SK-N-SH (cell line): ENCODE measurements at regions of chr2 and their contacts with region 1.

Region 1: GRCh38 chr2:64915510-64915900 is 73.7 kb upstream of the SLC1A4 start:
- DNase-seq: no peak
- H3K4me3 ChIP-seq: no peak overlapping the region
- H3K27ac ChIP-seq: no peak overlapping the region
- H3K4me1 ChIP-seq: no peaks in the 10 kb centered on the region
- H3K27me3 ChIP-seq: no peaks in the 10 kb centered on the region
- CTCF ChIP-seq: no peak
- EP300 ChIP-seq: no peak
- RAD21 ChIP-seq: no peak

Region 2: DNA sequence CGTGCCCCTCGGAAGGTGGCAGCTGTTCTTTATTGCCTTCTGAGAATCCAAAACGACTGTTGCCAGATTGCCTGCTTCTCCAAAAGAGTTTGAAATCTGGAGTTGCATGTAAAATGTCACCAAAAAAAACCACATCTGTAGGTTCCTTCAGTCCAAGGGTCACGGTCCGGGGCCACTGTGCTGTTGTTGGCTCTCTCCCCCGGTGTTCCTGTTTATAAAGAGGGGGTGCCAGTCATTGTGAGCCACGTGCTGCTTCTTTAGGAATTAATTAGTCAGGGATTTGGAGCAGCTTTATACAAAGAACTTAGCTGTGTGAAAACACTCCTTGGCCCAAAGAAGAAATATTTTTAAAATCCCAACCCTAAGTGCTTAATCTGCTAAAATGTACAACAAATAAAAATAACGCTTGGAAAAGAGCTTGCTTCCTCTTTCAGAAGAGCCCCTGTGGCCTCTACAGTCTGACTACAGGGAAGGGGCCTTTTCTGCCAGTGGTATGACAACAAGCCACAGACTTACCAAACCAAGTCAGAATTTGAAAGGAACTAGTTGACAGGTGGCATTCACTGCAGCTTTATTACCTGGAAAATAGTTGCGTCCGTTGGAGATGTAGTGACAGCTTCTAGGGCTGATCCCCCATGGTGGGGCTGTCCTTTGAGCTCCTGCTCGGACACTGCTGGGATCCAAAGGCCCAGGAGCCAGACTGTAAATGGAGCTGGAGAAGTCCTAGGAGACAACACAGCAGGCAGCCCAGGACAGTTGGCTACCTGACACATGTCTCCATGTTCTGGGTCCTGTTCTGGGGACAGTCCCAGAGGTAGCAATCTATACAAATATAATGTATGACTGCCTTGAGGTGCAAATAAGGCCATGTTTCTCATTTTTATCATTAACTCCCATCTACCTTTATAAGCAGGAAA is 10.8 kb before region 1 on chr2:
- CTCF ChIA-PET with region 1: interaction called, 32 read pairs
- POLR2A ChIA-PET with region 1: no interaction called
- DNase-seq: no peak
- H3K4me3 ChIP-seq: no peak overlapping the region
- H3K27ac ChIP-seq: no peak overlapping the region
- H3K4me1 ChIP-seq: no peaks in the 10 kb centered on the region
- H3K27me3 ChIP-seq: peaks cover 13% of the 10 kb centered on the region; the same call in 1 of the 2 replicates
- CTCF ChIP-seq: no peak
- EP300 ChIP-seq: no peak
- RAD21 ChIP-seq: no peak

Region 3: GRCh38 chr2:64988420-64989125 is 73.1 kb after region 1 on chr2:
- CTCF ChIA-PET with region 1: interaction called, 14 read pairs
- POLR2A ChIA-PET with region 1: no interaction called
- DNase-seq: peak; percentile 90
- H3K4me3 ChIP-seq: peak overlapping the region; percentile 79 to 85
- H3K27ac ChIP-seq: peak overlapping the region; percentile 91 to 93
- H3K4me1 ChIP-seq: peaks cover 4 to 15% of the 10 kb centered on the region in 2 experiments; a peak in 2 of 4 replicates
- H3K27me3 ChIP-seq: no peaks in the 10 kb centered on the region
- CTCF ChIP-seq: peak; percentile 56
- EP300 ChIP-seq: no peak
- RAD21 ChIP-seq: no peak

Region 4: DNA sequence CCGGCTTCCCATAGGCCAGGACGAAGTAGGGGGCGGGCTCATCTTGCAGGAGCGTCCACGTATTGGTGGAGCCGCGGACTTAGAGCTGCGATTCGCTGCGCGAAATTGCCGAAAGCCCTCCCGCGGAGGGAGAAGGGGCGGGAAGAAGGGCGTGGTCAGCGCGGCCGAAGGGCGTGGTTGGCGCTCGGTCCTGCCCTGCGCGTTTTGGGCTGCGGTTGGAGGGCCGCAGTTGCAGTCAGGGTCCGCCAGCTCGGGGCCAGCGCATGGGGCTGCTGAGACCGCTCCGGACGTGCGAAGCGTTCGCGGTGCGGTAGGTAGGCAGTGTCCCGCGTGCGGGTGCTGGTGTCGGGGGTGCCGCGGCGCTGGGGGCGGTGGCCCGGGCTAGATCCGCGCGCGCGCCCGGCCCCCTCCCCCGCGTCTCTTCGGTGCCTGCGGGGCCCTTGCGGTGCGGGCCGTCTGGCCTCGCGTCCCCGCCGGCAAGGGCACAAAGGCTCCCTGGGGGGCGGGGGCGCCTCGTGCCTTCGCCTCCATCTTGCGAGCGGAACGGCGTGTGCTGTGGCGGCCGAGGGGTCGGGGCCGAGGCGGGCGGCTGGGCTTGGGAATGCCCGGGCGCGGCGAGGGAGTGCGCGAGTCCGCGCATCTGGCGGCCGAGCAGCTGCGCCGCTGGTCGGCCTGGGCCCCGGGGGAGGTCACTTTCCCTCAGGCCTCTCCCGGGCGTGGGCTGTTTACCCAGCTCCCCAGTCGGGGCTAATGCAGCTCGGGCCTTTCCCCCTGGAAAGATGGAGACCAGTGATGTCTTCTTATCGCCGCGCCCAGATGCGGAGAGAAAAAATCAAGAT is 140.9 kb after region 1 on chr2 and contains the start of gene CEP68:
- CTCF ChIA-PET with region 1: interaction called, 17 read pairs
- POLR2A ChIA-PET with region 1: interaction called, 3 read pairs
- DNase-seq: peak; percentile 97
- H3K4me3 ChIP-seq: peak within 1 kb of the TSS; percentile 74 to 82
- H3K27ac ChIP-seq: peak within 1 kb of the TSS; percentile 45 to 73; a peak in 3 of 4 replicates
- H3K4me1 ChIP-seq: peaks cover 0 to 3% of the 10 kb centered on the region in 2 experiments; a peak in 1 of 4 replicates
- H3K27me3 ChIP-seq: no peaks in the 10 kb centered on the region
- CTCF ChIP-seq: no peak
- EP300 ChIP-seq: no peak
- RAD21 ChIP-seq: no peak
- polyA plus RNA-seq, gene CEP68: 6.2 and 7.8 TPM in 2 replicates

Region 5: GRCh38 chr2:65186872-65187851 is 271.7 kb after region 1 on chr2:
- CTCF ChIA-PET with region 1: interaction called, 14 read pairs
- POLR2A ChIA-PET with region 1: no interaction called
- DNase-seq: peak; percentile 84
- H3K4me3 ChIP-seq: no peak overlapping the region; a peak in 1 of 4 replicates
- H3K27ac ChIP-seq: no peak overlapping the region
- H3K4me1 ChIP-seq: no peaks in the 10 kb centered on the region; a peak in 1 of 4 replicates
- H3K27me3 ChIP-seq: no peaks in the 10 kb centered on the region
- CTCF ChIP-seq: peak; percentile 82
- EP300 ChIP-seq: no peak
- RAD21 ChIP-seq: peak; percentile 78